ENCODE measurements at regions of chr12 and their contacts with region 1.

Region 1: DNA sequence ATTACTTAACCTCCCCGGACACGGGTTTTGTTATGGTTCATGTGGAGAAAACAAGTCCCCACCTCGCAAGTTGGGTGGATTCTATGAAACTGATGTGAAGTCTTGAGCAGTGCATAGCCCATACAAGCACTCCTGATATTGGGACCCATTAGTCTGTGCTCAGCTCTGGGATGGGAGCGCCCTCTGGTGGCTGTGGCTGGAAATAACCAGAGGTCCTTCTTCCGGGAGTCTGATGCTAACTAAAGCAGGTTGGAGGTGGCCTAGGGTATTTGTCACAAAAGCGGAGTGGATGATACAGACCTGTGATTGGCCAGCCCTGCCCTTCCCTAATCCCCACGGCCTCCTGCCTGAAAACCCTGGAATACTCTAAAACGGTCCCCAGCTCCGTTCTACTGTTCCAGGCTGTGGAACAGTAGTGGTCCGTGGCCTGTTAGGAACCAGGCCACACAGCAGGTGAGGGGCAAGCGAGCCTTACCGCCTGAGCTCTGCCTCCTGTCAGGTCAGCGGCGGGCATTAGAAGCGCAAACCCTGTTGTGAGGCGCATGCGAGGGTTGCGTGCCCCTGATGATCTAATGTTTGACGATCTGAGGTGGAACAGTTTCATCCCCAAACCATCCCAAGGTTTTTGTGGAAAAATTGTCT is 6.4 kb downstream of the SLC48A1 start:
- DNase-seq: peak; percentile 87 to 98 (median 91)
- ATAC-seq: peak; percentile 98
- H3K4me3 ChIP-seq: no peak overlapping the region
- H3K4me3 Mint-ChIP-seq: no peak overlapping the region
- H3K27ac ChIP-seq: no peak overlapping the region
- H3K27ac Mint-ChIP-seq: no peak overlapping the region
- H3K4me1 ChIP-seq: peaks cover 8% of the 10 kb centered on the region
- H3K4me1 Mint-ChIP-seq: peaks cover 14% of the 10 kb centered on the region
- H3K27me3 ChIP-seq: no peaks in the 10 kb centered on the region
- H3K27me3 Mint-ChIP-seq: no peaks in the 10 kb centered on the region
- CTCF ChIP-seq: peak; percentile 82

Region 2: GRCh38 chr12:47651368-47652254 is 127.8 kb before region 1 on chr12:
- CTCF ChIA-PET with region 1: no interaction called
- POLR2A ChIA-PET with region 1: no interaction called
- intact Hi-C with region 1: loop called in 1 of 2 experiments (anchors 5 kb)
- DNase-seq: peak in 7 of 9 experiments; percentile 29 to 73 (median 42)
- ATAC-seq: peak; percentile 96
- H3K4me3 ChIP-seq: no peak overlapping the region
- H3K4me3 Mint-ChIP-seq: peak overlapping the region; percentile 64
- H3K27ac ChIP-seq: no peak overlapping the region
- H3K27ac Mint-ChIP-seq: peak overlapping the region; percentile 19
- H3K4me1 ChIP-seq: peaks cover 9% of the 10 kb centered on the region
- H3K4me1 Mint-ChIP-seq: peaks cover 16% of the 10 kb centered on the region
- H3K27me3 ChIP-seq: no peaks in the 10 kb centered on the region
- H3K27me3 Mint-ChIP-seq: no peaks in the 10 kb centered on the region
- CTCF ChIP-seq: peak; percentile 90

Region 3: DNA sequence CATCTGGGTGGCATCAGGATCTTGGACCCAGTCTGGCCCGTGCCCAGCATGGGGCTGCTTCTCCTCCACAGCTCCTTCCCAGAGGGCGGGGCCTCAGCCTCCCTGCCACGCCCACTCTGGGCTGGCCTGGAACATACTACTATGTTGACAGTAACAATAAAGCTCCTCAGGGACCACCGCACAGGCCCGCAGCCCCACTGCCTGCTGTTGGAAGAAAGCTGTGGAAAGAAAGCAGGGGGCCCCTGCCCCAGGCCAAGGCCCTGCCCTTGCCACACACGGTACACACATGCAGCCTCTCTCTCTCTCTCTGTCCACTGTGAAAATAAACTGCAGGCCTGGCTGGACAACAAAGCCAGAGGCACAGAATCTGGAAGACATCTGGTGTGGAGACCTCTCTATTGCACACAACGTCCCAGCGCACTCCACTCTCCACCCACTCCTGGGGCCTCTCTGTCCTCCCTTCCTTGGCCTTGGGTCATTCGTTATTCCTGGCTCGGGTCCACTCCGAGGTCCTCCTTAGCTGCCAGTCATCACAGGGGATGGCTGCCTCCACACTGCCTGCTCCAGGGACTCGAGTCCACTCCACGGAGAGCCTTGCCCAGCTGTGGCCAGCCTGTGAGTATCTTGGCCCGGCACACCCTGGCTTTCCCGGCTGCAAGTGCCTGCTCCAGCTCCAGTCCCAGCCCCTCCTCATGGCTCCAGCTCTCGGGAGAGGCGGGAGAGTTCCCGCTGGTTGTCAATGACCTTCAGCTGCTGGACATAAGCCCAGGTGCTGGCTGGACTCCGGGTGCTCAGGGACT is 42.3 kb before region 1 on chr12:
- CTCF ChIA-PET with region 1: interaction called, 500 read pairs
- POLR2A ChIA-PET with region 1: interaction called, 4 read pairs
- intact Hi-C with region 1: loop called in 1 of 2 experiments (anchors 1 kb)
- DNase-seq: no peak
- ATAC-seq: no peak
- H3K4me3 ChIP-seq: no peak overlapping the region
- H3K4me3 Mint-ChIP-seq: no peak overlapping the region
- H3K27ac ChIP-seq: no peak overlapping the region
- H3K27ac Mint-ChIP-seq: no peak overlapping the region
- H3K4me1 ChIP-seq: peaks cover 19% of the 10 kb centered on the region
- H3K4me1 Mint-ChIP-seq: peaks cover 22% of the 10 kb centered on the region
- H3K27me3 ChIP-seq: no peaks in the 10 kb centered on the region
- H3K27me3 Mint-ChIP-seq: no peaks in the 10 kb centered on the region
- CTCF ChIP-seq: no peak

Region 4: DNA sequence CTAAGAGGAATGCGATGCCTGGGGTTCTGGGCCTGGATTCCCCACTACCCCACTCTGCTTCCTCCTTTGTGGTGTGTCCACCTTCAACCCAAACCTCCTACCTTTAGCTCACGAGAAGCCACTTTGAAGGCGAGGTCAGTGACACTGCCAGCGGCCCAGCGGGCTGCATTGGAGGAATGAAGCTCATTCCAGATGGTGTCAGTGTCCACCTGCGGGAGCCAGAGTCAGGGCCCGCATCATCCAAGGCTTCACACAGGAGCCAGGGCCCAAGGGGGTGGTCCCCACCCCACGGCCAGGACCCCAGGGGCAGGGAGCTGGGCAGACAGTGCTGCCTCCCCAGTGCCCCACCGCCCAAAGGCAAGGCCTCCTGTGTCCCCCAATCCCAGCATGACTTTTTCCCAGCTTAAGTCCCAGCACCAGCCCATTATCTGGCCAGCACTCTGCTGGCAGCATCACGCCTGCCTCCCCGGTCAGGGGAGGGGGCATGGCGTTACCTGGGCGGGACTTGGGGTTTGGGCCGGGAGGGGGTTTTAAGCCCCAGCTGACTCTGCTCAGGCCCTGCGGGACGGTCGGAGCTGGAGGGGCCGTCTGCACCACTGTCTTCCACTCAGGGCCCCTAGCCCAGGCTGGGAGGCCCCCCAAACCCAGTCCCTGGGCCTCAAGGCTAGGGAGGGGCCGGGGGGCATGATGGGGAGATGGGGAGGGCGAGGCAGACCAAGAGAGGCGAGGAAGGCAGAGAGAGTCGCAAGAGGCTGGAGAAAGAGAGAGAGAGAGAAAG is 10.5 kb after region 1 on chr12:
- CTCF ChIA-PET with region 1: interaction called, 27 read pairs
- POLR2A ChIA-PET with region 1: interaction called, 4 read pairs
- intact Hi-C with region 1: no loop called
- DNase-seq: no peak
- ATAC-seq: no peak
- H3K4me3 ChIP-seq: no peak overlapping the region
- H3K4me3 Mint-ChIP-seq: no peak overlapping the region
- H3K27ac ChIP-seq: no peak overlapping the region
- H3K27ac Mint-ChIP-seq: no peak overlapping the region
- H3K4me1 ChIP-seq: no peaks in the 10 kb centered on the region
- H3K4me1 Mint-ChIP-seq: no peaks in the 10 kb centered on the region
- H3K27me3 ChIP-seq: no peaks in the 10 kb centered on the region
- H3K27me3 Mint-ChIP-seq: no peaks in the 10 kb centered on the region
- CTCF ChIP-seq: no peak

Region 5: GRCh38 chr12:47828608-47829536 is 49.5 kb after region 1 on chr12:
- CTCF ChIA-PET with region 1: interaction called, 728 read pairs
- POLR2A ChIA-PET with region 1: interaction called, 4 read pairs
- intact Hi-C with region 1: no loop called
- DNase-seq: no peak
- ATAC-seq: no peak
- H3K4me3 ChIP-seq: no peak overlapping the region
- H3K4me3 Mint-ChIP-seq: no peak overlapping the region
- H3K27ac ChIP-seq: no peak overlapping the region
- H3K27ac Mint-ChIP-seq: peak overlapping the region; percentile 64
- H3K4me1 ChIP-seq: peaks cover 95% of the 10 kb centered on the region
- H3K4me1 Mint-ChIP-seq: peaks cover 84% of the 10 kb centered on the region
- H3K27me3 ChIP-seq: no peaks in the 10 kb centered on the region
- H3K27me3 Mint-ChIP-seq: no peaks in the 10 kb centered on the region
- CTCF ChIP-seq: no peak

Region 6: DNA sequence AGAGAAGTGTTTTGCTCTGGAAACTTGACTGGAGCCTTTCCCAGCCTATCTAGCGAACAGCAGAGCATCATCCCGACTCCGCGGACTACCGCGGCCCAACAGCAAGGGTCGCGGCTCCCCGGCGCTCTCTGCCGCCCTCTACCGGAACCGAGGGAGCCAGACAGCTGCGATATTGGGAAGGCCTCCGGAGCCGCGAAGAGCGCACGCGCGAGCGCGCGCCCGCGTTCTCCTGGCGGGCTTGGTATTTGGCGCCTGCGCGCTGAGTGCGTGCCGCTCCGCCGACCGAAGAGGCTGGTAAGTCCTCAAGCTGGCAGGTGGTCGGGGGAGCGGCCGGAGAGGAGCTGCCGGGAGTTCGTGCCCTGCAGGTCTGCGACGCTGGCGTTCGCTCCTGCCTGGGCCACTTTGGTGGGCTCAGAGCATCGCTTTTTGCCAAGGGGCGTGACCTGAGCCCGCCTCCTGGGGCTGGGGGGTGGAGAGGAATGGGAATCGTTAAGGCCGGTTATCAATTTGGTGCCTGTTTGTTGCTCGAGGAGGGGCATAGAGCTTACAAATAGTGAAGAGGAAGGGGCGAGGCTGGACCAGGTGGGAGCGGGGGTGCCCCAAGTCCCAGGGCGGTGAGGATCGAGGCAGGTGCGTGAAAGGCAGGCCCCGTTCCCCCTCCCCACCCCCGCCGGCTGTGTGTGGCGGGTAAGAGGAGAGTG is 184.1 kb after region 1 on chr12 and contains the start of gene TMEM106C:
- CTCF ChIA-PET with region 1: no interaction called
- POLR2A ChIA-PET with region 1: no interaction called
- intact Hi-C with region 1: loop called in 1 of 2 experiments (anchors 10 kb)
- DNase-seq: peak; percentile 82 to 96 (median 90)
- ATAC-seq: peak; percentile 98
- H3K4me3 ChIP-seq: peak within 1 kb of the TSS; percentile 67 to 76
- H3K4me3 Mint-ChIP-seq: peak within 1 kb of the TSS; percentile 97
- H3K27ac ChIP-seq: peak within 1 kb of the TSS in 1 of 2 experiments; percentile 43
- H3K27ac Mint-ChIP-seq: peak within 1 kb of the TSS; percentile 83
- H3K4me1 ChIP-seq: peaks cover 13% of the 10 kb centered on the region
- H3K4me1 Mint-ChIP-seq: peaks cover 25% of the 10 kb centered on the region
- H3K27me3 ChIP-seq: no peaks in the 10 kb centered on the region
- H3K27me3 Mint-ChIP-seq: peaks cover 11% of the 10 kb centered on the region
- CTCF ChIP-seq: peak; percentile 93
- total RNA-seq, gene TMEM106C: 12.1 to 13.1 TPM